Testis (tissue), 5 donors: ENCODE measurements at regions of chr10 and their contacts with region 1.

Region 1: DNA sequence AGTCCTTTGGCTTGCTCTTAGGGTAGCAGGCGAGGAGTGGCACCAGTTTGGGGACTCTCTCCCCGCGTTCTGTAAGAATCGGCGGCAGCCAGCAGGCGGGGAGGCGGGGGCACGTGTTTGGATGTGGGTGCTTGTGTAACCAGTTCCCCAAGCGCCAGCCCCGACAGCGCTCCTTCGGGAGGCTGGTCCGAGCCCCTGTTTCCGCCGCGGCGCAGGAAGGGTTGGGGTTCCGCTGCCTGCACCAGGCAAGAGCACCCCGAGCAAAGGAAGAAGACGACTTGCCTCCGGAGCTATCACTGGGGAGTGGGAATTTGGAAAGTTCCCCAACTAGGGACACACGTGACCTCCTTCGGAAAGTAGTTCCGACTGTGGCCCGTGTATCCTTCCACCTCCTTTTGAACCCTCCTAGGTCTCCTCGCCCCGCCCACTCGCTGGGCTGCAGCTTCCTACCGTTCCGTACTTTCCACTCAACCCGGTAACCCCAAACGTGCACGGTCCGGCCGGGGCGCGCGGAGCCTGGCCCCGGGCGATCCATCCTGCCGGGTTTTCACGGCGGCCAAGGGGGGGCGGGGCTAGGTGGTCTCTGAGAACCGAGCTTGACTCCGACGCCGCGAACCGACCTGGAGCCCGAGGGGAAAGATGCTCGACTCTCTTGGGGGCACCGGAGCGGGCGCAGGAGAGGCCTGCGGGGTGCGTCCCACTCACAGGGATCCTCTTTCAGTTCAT is 1.2 kb downstream of the KLLN start:
- DNase-seq: peak; percentile 97
- H3K4me3 ChIP-seq: peak overlapping the region; percentile 93 to 96
- H3K27ac ChIP-seq: peak overlapping the region; percentile 87 to 99
- H3K4me1 ChIP-seq: peaks cover 11% of the 10 kb centered on the region
- H3K27me3 ChIP-seq: no peaks in the 10 kb centered on the region
- CTCF ChIP-seq: peak in 1 of 3 experiments; percentile 1
- POLR2A ChIP-seq: no peak

Region 2: DNA sequence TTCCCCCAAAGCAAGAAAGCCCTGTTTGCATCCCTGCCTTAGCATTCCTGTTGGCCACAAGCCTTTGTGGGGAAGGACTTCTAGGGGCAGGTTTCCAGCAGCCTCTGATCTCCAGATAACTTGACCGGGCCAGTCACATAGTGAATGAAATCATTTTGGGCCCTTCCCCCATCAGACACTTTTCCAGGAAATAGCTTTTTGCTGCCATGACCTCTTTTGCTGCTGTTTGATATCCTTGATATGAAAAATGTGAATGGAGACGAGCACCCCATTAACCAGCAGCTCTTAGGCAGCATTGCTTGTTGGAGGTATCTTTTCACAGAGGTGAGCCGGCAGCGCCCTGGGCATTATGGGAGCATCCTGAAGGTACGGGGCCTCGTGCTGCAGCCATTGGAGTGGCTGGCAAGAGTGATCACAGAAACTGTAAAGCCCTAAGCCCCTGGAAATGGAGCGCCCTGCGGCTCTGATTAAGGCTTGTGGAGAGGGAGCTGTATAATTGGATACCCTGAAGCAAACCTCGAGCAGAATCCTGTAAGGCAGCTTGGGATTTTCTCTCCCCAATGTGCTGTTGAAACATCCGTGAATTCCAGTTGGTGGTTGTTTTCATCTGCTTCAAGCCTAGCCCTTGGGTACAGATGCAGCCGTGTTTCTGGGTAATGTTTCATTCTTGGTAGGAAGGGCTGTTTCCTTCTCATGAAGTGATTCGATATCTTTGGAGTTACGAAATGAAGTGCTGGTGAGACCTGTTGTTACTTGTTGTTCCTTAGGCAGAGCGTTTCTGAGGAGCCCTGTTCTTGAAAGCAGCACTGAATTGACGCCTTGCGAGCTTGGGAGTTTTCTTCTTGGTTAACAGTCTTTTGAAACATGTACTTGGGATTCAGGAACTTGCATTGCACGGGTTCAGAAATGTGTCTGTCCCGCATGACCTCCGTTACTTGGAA is 180.3 kb after region 1 on chr10:
- intact Hi-C with region 1: loop called (anchors 10 kb)
- DNase-seq: peak; percentile 41
- H3K4me3 ChIP-seq: no peak overlapping the region
- H3K27ac ChIP-seq: peak overlapping the region in 1 of 2 donors; percentile 64
- H3K4me1 ChIP-seq: peaks cover 9% of the 10 kb centered on the region
- H3K27me3 ChIP-seq: no peaks in the 10 kb centered on the region
- CTCF ChIP-seq: no peak
- POLR2A ChIP-seq: no peak

Region 3: DNA sequence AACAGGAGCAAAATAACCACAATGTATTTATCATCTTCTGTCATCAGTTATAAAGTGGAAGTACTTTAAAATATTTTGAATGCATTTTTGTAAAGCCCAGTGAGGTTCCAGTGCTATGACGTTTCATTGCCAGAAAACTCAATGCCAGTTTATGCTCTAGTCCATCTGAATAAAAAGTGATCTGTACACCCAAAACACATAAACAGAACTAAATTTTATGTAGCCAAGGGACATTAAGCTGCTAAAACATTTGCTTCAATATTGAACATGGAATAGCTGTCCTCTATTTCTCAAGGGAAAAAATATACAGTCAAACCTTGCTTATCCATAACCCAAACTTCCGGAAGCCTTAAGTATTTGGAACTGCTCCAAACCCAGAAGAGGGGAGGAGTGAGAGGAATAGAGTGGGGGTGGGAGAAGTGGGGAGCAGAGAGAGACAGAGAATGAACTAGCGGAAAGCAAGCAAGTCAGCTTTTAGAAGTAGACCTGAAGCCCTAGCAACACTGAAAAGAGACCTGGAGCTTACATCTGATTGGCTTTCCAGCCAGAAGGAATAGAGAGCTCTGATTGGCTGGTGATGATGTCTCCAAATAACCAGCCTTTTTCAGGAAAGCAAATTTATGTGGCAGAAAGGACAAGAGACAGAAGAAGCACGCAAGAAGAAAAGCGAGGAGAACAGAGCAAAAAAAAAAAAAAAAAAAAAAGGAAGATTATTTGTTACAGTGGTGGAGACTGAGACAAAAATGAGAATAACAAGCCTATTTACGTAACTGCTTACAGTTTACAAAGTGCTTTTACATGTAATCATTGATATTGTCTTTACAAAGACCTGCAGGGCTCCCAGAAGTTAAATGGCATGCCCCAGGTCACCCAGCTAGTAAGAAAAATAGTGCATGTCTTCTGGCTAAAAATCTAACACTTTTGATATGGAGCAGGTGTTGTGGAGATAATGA is 525.0 kb after region 1 on chr10:
- intact Hi-C with region 1: loop called (anchors 10 kb)
- DNase-seq: peak; percentile 60
- H3K4me3 ChIP-seq: no peak overlapping the region
- H3K27ac ChIP-seq: peak overlapping the region; percentile 73
- H3K4me1 ChIP-seq: peaks cover 31% of the 10 kb centered on the region
- H3K27me3 ChIP-seq: no peaks in the 10 kb centered on the region
- CTCF ChIP-seq: no peak
- POLR2A ChIP-seq: no peak